HEK293 (cell line): ENCODE measurements at regions of chr1 and their contacts with region 1.

Region 1: DNA sequence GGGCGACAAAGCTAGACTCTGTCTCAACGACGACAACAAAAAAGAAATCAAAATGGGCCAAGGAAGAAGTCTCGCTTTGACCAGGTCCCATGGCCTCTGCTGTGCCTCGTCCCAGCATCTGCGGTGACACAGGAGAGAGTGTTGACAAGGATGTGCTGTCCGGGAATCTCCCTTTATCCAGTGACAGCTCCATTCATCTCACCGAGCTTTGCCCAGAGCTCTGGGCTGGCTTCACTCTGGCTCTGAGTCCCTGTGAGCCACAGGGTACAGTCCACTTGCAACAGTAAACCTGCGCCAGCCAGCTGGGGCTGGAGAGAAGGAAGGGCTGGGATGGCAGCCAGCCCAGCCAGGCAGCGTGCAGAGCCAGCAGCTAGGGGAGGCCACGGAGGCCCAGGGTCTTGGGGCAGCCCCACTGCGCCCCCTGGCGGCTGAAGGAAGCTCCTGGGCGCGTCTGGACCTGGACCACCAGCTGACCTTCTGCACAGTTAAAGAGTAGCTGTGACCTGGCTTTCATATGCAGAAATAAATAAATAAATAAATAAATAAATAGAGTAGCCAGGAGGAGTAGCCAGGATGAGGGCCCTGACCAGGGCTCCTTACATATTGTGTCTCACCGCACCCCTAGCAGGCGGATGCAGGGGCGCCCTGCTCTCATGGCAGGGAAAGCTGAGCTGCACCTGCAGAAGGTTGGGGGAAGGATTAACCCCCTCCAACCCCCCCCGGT is 29.7 kb downstream of the ENO1 start:
- H3K4me3 ChIP-seq: no peak overlapping the region
- H3K27ac ChIP-seq: no peak overlapping the region
- H3K4me1 ChIP-seq: 0 out of 2 replicates have a peak, but pooled peaks cover 2% of the 10 kb centered on the region
- CTCF ChIP-seq: peak; percentile 86

Region 2: DNA sequence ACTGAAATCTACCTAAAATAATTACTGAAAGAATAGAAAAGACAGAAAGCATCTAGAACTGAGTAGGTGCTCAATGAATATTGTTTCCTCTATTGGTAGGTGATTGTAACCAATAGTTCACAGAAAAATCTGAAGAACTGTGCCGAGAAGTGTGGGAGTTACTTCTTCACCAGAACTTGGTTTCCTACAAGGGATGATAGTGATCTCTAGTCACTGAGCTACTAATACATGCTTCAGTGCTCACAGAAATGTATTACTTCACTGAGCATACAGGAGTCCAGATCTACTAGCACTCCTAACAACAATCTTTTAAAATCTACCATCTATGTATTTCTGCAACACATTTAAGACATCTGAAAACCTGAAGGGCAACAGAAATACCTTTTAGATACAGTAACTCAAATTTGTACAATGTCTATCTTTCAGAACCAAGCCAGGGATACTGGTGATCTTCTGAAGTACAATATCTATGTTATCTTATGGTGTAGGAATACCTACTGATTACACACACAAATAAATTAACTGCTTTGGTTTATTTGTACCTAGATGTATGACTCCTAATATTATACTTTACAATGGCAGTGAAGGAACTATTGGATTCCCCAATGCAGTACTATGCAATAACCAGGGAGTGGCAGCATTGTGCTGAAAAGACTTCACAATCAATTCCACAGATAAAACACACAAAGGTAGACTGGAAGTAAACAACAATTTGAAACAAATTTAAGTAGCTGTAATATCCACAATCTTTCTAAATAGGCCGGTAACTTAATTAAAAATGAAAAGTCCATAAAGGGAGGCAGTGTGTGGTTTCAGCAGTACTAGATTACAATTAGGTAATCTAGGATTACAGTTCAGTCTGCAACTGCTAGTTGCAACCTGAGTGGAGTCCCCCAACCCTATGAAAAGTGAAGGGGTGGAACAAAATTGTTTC is 287.9 kb before region 1 on chr1:
- CTCF ChIA-PET with region 1: interaction called, 35 read pairs
- POLR2A ChIA-PET with region 1: no interaction called
- H3K4me3 ChIP-seq: no peak overlapping the region
- H3K27ac ChIP-seq: no peak overlapping the region
- H3K4me1 ChIP-seq: no peaks in the 10 kb centered on the region
- CTCF ChIP-seq: peak; percentile 56; the same call in 1 of the 2 replicates

Region 3: GRCh38 chr1:8702850-8703810 is 145.7 kb before region 1 on chr1:
- CTCF ChIA-PET with region 1: interaction called, 13 read pairs
- POLR2A ChIA-PET with region 1: interaction called, 6 read pairs
- H3K4me3 ChIP-seq: peak overlapping the region; percentile 65
- H3K27ac ChIP-seq: peak overlapping the region; percentile 91
- H3K4me1 ChIP-seq: peaks cover 34% of the 10 kb centered on the region
- CTCF ChIP-seq: no peak

Region 4: GRCh38 chr1:8727809-8728213 is 121.0 kb before region 1 on chr1:
- CTCF ChIA-PET with region 1: interaction called, 28 read pairs
- POLR2A ChIA-PET with region 1: interaction called, 4 read pairs
- H3K4me3 ChIP-seq: no peak overlapping the region
- H3K27ac ChIP-seq: no peak overlapping the region
- H3K4me1 ChIP-seq: peaks cover 7% of the 10 kb centered on the region
- CTCF ChIP-seq: no peak

Region 5: DNA sequence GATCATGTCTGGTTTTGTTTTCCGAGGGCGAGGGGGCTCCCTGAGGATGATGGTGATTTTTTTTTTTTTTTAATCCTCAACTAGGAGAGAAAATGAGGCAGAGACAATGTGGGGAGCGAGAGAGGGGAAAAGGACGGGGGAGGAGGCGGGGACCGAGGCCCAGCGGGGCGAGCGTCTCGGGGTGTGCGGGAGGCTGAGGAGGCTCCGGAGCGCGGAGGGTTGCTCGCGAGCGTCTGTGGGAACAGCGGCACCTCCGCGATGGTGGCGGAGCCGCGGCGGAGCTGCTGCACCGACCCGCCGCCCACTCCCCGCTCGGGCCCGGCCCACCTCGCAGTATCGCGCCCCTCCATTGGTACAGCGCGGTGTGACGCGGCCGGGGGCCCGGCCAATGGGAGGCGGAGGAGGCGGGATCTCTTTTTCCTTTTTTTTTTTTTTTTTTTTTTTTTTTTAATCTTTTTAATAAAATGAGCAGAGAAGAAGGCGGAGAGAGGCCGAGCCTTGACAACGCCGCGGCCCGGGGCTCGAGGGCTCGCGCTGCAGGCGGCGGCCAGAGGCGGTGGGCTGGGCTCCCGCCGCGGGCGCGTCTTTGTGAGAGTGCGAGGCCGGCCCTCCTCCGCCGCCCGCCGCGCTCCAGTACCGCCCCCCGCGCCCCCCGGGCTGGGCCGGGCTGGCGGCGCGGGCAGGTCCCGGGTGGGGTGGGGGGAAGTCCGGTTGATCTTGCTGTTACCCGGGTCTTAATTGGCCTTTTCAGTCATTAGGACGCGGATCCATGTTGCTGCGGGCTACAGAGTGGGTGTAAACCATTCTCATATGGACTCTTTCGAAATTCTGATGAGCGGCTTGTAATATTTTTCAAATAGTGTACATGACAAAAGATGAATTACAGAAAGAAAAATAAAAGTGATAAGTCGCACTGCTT is 31.2 kb before region 1 on chr1 and contains the start of gene RERE:
- CTCF ChIA-PET with region 1: interaction called, 59 read pairs
- POLR2A ChIA-PET with region 1: interaction called, 16 read pairs
- H3K4me3 ChIP-seq: peak within 1 kb of the TSS; percentile 89
- H3K27ac ChIP-seq: peak within 1 kb of the TSS; percentile 97
- H3K4me1 ChIP-seq: peaks cover 17% of the 10 kb centered on the region
- CTCF ChIP-seq: peak; percentile 73

Region 6: DNA sequence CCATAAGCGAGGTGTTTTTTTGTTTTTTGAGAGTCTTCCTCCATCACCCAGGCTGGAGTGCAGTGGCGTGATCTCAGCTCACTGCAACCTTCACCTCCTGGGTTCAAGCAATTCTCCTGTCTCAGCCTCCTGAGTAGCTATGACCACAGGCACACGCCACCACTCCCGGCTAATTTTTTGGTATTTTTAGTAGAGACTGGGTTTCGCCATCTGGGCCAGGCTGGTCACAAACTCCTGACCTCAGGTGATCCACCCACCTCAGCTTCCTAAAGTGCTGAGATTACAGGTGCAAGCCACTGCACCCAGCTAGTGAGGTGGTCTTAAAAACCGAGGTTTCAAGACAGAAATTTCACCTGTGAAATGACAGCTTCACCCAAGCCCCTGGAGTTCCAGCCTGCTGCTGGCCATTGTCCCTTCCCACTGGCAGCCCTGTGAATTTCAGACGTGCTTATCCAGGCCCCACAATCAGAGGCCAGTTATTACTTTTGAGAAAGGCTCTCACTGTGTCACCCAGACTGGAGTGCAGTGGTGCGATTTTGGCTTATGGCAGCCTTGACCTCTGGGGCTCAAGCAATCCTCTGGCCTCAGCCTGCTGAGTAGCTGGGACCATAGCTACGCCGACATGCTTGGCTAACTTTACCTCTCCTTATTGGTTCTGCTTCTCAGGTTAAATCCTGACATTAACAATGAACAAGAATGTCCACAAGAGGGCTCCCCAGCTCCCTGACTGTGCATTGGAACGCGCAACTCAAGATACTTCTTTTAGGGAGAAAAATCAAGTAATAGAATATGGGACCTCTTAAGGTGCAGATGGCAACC is 10.3 kb after region 1 on chr1:
- CTCF ChIA-PET with region 1: interaction called, 43 read pairs
- POLR2A ChIA-PET with region 1: interaction called, 7 read pairs
- H3K4me3 ChIP-seq: no peak overlapping the region
- H3K27ac ChIP-seq: no peak overlapping the region
- H3K4me1 ChIP-seq: no peaks in the 10 kb centered on the region
- CTCF ChIP-seq: peak; percentile 59

Region 7: GRCh38 chr1:8915446-8915845 is 66.6 kb after region 1 on chr1:
- CTCF ChIA-PET with region 1: no interaction called
- POLR2A ChIA-PET with region 1: no interaction called
- H3K4me3 ChIP-seq: no peak overlapping the region
- H3K27ac ChIP-seq: no peak overlapping the region
- H3K4me1 ChIP-seq: peaks cover 6% of the 10 kb centered on the region
- CTCF ChIP-seq: no peak

Region 8: GRCh38 chr1:8926707-8927694 is 78.2 kb after region 1 on chr1:
- CTCF ChIA-PET with region 1: no interaction called
- POLR2A ChIA-PET with region 1: no interaction called
- H3K4me3 ChIP-seq: no peak overlapping the region
- H3K27ac ChIP-seq: no peak overlapping the region
- H3K4me1 ChIP-seq: no peaks in the 10 kb centered on the region
- CTCF ChIP-seq: no peak

Region 9: GRCh38 chr1:8970870-8971337 is 122.1 kb after region 1 on chr1:
- CTCF ChIA-PET with region 1: no interaction called
- POLR2A ChIA-PET with region 1: no interaction called
- H3K4me3 ChIP-seq: no peak overlapping the region
- H3K27ac ChIP-seq: no peak overlapping the region
- H3K4me1 ChIP-seq: no peaks in the 10 kb centered on the region
- CTCF ChIP-seq: no peak